ENCODE measurements at regions of chr1 and their contacts with region 1.

Region 1: DNA sequence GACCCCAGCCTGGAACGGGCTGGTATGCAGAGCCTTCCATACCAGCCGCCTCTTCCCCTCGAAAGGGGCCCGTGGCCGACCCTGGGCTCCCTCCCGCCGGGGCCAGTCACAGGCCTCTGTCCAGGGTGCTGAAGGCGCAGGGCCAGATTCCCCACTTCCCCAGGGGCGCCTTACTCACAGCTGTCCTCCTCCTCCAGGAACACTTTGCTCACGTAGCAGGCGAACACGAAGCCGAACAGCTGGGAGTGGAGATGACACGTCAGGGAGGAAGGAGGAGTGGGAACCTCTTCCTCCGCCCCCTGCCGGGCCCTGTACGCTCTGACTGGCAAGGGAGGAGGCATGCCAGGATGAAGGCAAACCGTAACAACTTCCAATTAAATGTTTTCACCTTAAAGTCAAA is 57.3 kb downstream of the NKAIN1 start:
- DNase-seq: peak; percentile 90
- ATAC-seq: peak; percentile 70
- H3K4me3 Mint-ChIP-seq: peak overlapping the region; percentile 69
- H3K27ac Mint-ChIP-seq: no peak overlapping the region
- H3K4me1 Mint-ChIP-seq: 0 out of 2 replicates have a peak, but pooled peaks cover 2% of the 10 kb centered on the region
- H3K27me3 Mint-ChIP-seq: 0 out of 2 replicates have a peak, but pooled peaks cover 4% of the 10 kb centered on the region
- CTCF ChIP-seq: no peak

Region 2: GRCh38 chr1:31127266-31127665 is 55.1 kb before region 1 on chr1:
- CTCF ChIA-PET with region 1: interaction called, 12 read pairs
- POLR2A ChIA-PET with region 1: no interaction called
- DNase-seq: no peak
- ATAC-seq: no peak
- H3K4me3 Mint-ChIP-seq: no peak overlapping the region
- H3K27ac Mint-ChIP-seq: no peak overlapping the region
- H3K4me1 Mint-ChIP-seq: peaks cover 7% of the 10 kb centered on the region
- H3K27me3 Mint-ChIP-seq: no peaks in the 10 kb centered on the region
- CTCF ChIP-seq: no peak

Region 3: DNA sequence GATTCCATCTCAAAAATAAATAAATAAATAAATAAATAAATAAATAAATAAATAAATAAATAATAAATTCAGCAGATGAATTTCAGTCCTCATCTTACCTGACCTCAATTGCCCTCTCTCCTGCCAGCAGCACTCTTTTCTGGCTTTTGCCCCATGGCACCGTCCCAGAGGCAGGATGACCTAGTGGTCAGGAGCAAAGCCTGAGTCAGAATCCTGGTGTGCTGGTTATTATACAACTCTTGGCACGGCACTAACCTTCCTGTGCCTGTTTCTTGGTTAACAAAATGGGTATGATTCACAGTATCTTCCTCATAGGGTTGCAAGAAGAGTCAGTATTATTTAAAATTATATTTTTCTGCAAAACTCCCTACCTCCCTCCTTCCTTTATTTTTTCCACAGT is 14.3 kb after region 1 on chr1:
- CTCF ChIA-PET with region 1: interaction called, 69 read pairs
- POLR2A ChIA-PET with region 1: interaction called, 3 read pairs
- DNase-seq: no peak
- ATAC-seq: no peak
- H3K4me3 Mint-ChIP-seq: no peak overlapping the region
- H3K27ac Mint-ChIP-seq: no peak overlapping the region
- H3K4me1 Mint-ChIP-seq: peaks cover 22% of the 10 kb centered on the region
- H3K27me3 Mint-ChIP-seq: no peaks in the 10 kb centered on the region
- CTCF ChIP-seq: no peak

Region 4: DNA sequence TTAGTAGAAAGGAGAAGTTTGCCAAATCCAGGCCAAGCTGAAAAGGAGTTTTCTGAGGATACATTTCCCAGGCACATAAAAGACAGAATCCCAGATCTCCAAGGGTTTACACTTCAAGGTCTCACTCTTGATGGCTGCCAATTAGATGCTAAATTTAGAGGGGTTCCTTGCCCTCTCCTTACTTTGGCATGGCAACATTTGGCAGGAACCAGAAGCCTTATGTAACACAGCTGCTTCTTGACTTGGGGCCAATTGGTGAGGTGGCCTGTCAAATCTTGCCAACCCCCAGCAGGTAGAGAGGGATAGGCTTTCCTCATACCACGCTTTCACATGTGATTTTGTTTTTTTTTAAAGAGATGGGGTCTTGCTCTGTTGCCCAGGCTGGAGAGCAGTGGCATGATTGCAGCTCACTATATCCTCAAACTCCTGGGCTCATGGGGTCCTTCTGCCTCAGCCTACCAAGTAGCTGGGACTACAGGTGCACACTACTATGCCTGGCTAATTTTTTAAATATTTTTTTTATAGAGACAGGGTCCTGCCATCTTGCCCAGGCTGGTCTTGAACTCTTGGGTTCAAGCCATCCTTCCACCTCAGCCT is 82.5 kb after region 1 on chr1:
- CTCF ChIA-PET with region 1: interaction called, 32 read pairs
- POLR2A ChIA-PET with region 1: no interaction called
- DNase-seq: no peak
- ATAC-seq: no peak
- H3K4me3 Mint-ChIP-seq: no peak overlapping the region
- H3K27ac Mint-ChIP-seq: no peak overlapping the region
- H3K4me1 Mint-ChIP-seq: no peaks in the 10 kb centered on the region
- H3K27me3 Mint-ChIP-seq: no peaks in the 10 kb centered on the region
- CTCF ChIP-seq: no peak

Region 5: DNA sequence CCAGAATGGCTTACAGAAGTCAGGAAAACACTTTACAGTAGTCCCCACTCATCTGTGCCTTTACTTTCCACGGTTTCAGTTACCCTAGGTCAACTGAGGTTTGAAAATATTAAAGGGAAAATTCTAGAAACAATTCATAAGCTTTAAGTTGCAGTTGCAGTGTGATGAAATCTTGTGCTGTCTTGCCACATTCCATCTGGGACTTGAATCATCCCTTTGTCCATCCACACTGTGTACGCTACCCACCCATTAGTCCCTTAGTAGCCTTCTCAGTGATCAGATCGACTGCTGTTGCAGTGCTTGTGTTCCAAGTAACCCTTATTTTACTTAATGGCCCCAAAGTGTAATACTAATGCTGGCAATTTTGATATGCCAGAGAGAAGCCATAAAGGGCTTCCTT is 145.0 kb after region 1 on chr1:
- CTCF ChIA-PET with region 1: interaction called, 20 read pairs
- POLR2A ChIA-PET with region 1: no interaction called
- DNase-seq: no peak
- ATAC-seq: no peak; the same call in 1 of the 2 replicates
- H3K4me3 Mint-ChIP-seq: no peak overlapping the region
- H3K27ac Mint-ChIP-seq: no peak overlapping the region
- H3K4me1 Mint-ChIP-seq: no peaks in the 10 kb centered on the region
- H3K27me3 Mint-ChIP-seq: no peaks in the 10 kb centered on the region
- CTCF ChIP-seq: no peak

Region 6: DNA sequence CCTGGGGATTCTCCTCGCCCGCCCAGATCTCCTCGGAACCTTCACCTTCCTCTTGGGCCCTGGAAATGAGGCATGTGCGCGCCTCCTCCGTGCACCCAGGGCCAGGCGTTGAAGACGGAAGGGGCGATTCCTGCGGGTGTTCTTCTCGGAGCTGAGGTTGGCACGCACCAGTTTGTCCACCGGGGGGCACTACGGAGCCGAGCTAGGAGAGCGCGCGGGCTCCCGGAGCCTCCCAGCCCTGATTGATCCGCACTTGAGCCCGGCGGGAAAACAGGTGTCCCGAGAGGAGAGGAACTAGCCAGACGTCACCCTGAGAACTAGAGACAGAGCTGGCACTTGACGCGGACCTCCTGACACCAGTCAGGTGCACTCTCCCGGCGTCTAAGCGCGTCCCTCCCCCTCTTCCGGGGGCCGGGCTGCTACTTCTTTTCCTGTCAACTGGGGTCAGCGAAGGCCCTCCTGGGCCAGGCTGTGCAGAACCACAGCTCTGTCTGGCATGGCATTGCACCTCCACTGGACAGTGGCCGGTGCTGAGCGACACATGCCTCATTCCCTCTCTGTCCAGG is 212.4 kb after region 1 on chr1:
- CTCF ChIA-PET with region 1: interaction called, 22 read pairs
- POLR2A ChIA-PET with region 1: no interaction called
- DNase-seq: peak; percentile 96
- ATAC-seq: peak; percentile 95
- H3K4me3 Mint-ChIP-seq: peak overlapping the region; percentile 63
- H3K27ac Mint-ChIP-seq: no peak overlapping the region
- H3K4me1 Mint-ChIP-seq: peaks cover 19% of the 10 kb centered on the region
- H3K27me3 Mint-ChIP-seq: peaks cover 9% of the 10 kb centered on the region
- CTCF ChIP-seq: peak; percentile 72